ENCODE measurements at regions of chr3 and their contacts with region 1.

Region 1: GRCh38 chr3:197501879-197502620 is 53.7 kb downstream of the BDH1 start:
- DNase-seq: peak; percentile 64
- H3K4me3 ChIP-seq: no peak overlapping the region
- H3K27ac ChIP-seq: no peak overlapping the region
- H3K4me1 ChIP-seq: no peaks in the 10 kb centered on the region
- H3K27me3 ChIP-seq: no peaks in the 10 kb centered on the region
- CTCF ChIP-seq: peak; percentile 74 to 78
- POLR2A ChIP-seq: no peak

Region 2: GRCh38 chr3:197256836-197257444 is 245.1 kb before region 1 on chr3:
- CTCF ChIA-PET with region 1: interaction called, 148 read pairs
- POLR2A ChIA-PET with region 1: interaction called, 3 read pairs
- dilution Hi-C with region 1: loop called (anchors 25 kb)
- intact Hi-C with region 1: loop called (anchors 1 kb)
- DNase-seq: peak; percentile 71
- H3K4me3 ChIP-seq: no peak overlapping the region
- H3K27ac ChIP-seq: no peak overlapping the region
- H3K4me1 ChIP-seq: no peaks in the 10 kb centered on the region
- H3K27me3 ChIP-seq: no peaks in the 10 kb centered on the region
- CTCF ChIP-seq: peak; percentile 34 to 50
- POLR2A ChIP-seq: no peak

Region 3: GRCh38 chr3:197298341-197298857 is 203.7 kb before region 1 on chr3 and contains the start of gene DLG1:
- CTCF ChIA-PET with region 1: interaction called, 48 read pairs
- POLR2A ChIA-PET with region 1: no interaction called
- dilution Hi-C with region 1: no loop called
- intact Hi-C with region 1: loop called (anchors 2 kb)
- DNase-seq: peak; percentile 94
- H3K4me3 ChIP-seq: peak within 1 kb of the TSS; percentile 61 to 98 (median 73)
- H3K27ac ChIP-seq: peak within 1 kb of the TSS; percentile 64
- H3K4me1 ChIP-seq: peaks cover 18% of the 10 kb centered on the region
- H3K27me3 ChIP-seq: no peaks in the 10 kb centered on the region
- CTCF ChIP-seq: no peak
- POLR2A ChIP-seq: peak; percentile 30
- total RNA-seq, gene DLG1: 66.0 and 80.1 TPM in 2 replicates

Region 4: DNA sequence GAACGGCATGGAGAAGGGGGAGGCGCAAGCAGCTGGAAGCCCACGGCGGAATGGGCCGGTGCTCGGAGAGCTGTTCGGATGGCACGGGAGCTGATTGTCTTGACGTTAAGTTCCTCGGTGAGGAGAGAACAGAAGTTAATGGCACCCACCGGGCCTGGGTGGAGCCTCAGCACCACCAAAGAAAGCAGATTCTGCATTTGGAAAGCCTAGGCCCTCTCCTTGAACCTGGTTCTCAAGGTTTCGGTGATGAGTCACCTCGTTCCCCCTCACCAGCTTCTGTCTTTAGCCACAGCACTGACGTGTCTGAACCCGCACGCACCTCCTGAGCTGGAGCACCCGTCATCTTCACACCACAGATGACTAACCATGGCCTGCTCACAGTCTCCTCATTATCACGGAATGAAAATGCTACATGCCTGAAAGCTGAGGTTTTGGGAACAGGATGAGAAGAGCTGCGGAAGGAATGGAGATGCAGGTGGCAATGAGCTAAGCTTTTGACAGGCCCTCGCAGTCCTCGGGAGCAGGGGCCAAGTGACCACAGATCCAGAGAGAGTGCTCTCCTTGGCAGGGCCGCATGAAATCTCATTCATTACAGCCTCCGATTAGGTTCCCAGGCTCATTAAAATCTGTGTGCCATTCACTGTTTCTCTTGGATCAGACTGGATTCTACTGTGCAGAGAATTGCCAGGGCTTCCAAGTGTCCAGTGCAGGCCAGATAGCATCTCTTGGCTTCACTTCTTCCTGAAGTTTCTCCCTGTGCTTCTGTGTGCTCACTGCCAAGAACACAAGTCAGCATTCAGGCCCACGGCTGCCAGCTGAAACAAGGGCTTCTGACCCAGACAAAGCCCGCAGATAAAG is 107.4 kb before region 1 on chr3:
- CTCF ChIA-PET with region 1: interaction called, 16 read pairs
- POLR2A ChIA-PET with region 1: no interaction called
- dilution Hi-C with region 1: no loop called
- intact Hi-C with region 1: no loop called
- DNase-seq: peak; percentile 94
- H3K4me3 ChIP-seq: no peak overlapping the region
- H3K27ac ChIP-seq: peak overlapping the region; percentile 90
- H3K4me1 ChIP-seq: peaks cover 33% of the 10 kb centered on the region
- H3K27me3 ChIP-seq: peaks cover 4 to 5% of the 10 kb centered on the region in 2 experiments
- CTCF ChIP-seq: no peak
- POLR2A ChIP-seq: no peak

Region 5: GRCh38 chr3:197466586-197467399 is 35.3 kb before region 1 on chr3:
- CTCF ChIA-PET with region 1: interaction called, 14 read pairs
- POLR2A ChIA-PET with region 1: no interaction called
- dilution Hi-C with region 1: no loop called
- intact Hi-C with region 1: no loop called
- DNase-seq: peak; percentile 69
- H3K4me3 ChIP-seq: no peak overlapping the region
- H3K27ac ChIP-seq: peak overlapping the region; percentile 36
- H3K4me1 ChIP-seq: peaks cover 33% of the 10 kb centered on the region
- H3K27me3 ChIP-seq: no peaks in the 10 kb centered on the region
- CTCF ChIP-seq: no peak
- POLR2A ChIP-seq: no peak

Region 6: GRCh38 chr3:197590313-197590962 is 88.4 kb after region 1 on chr3:
- CTCF ChIA-PET with region 1: no interaction called
- POLR2A ChIA-PET with region 1: no interaction called
- dilution Hi-C with region 1: no loop called
- intact Hi-C with region 1: no loop called
- DNase-seq: no peak
- H3K4me3 ChIP-seq: no peak overlapping the region
- H3K27ac ChIP-seq: no peak overlapping the region
- H3K4me1 ChIP-seq: no peaks in the 10 kb centered on the region
- H3K27me3 ChIP-seq: peaks cover 2% of the 10 kb centered on the region in 2 experiments
- CTCF ChIP-seq: no peak
- POLR2A ChIP-seq: no peak

Region 7: DNA sequence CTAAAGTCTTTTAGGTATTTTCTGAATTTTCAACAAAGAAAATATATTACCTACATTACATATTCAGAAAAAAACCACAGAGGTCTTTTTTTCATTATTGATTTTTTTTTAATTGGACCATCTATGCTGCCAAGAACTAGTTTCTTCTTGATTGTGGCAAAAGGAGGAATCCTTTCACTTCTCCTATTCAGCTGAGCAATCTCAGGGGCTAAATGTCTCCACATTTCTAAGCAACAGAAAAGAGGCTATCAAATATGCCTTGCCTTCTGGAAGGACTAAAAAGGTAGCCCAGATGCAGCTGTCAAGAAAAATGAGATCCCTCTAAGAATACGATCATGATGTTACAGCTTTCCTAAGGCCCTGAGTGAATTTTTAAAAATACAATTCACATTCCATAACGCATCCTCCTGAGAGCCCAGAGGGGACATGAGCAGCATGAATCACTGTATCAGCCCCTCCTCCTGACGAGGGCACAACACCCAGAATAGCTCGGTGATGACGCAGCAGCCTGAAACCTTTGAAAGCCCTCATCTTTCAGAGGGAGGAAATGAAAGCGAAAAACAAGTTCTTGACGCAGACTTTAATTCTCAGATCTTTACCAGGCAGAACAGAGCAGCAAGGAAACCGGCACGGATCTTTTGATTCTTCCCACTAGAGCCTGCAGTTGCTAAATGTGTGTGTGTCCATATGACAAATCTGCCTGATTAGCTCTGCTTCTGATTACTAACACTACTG is 210.1 kb after region 1 on chr3:
- CTCF ChIA-PET with region 1: no interaction called
- POLR2A ChIA-PET with region 1: no interaction called
- dilution Hi-C with region 1: no loop called
- intact Hi-C with region 1: no loop called
- DNase-seq: peak; percentile 98
- H3K4me3 ChIP-seq: peak overlapping the region in 1 of 3 experiments; percentile 70
- H3K27ac ChIP-seq: peak overlapping the region; percentile 71
- H3K4me1 ChIP-seq: peaks cover 26% of the 10 kb centered on the region
- H3K27me3 ChIP-seq: no peaks in the 10 kb centered on the region
- CTCF ChIP-seq: no peak
- POLR2A ChIP-seq: peak; percentile 46

Region 8: DNA sequence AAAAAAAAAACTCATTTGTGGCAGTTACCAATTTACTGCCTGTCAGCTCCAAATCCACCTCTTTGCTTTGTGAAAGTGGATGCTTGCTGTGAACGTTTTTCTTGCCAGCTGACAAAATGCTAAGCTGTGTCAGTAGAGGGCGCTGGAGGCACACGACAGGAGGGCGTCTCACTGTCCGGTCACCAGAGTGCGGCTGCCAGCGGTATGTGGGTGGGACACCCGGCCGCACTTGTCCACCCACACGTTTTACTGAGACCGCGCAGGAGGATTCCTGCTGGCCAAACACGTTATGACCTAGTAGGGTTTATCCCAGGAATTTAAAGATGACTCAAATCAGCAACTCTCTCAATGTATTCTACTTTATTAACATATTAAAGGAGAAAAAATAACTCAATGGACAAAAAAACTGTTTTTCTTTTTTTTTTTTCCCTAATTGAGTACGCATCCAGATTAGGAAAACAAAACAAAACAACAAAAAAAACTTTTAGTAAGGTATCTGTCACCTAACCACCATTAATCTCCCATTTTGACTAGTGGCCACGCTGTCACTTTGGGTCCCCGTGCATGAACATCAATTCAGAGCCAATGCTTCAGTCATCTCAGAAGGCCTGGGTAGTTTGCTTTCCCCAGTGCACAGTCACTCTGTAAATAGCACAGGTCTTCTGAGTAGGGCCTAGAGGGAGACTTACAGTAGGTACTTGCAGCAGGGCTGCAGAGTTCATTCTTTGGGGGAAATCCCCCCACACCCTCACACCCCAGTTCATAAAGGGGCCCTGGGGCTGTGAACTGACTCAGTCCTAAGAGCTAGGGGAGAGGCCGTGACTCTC is 404.2 kb after region 1 on chr3:
- CTCF ChIA-PET with region 1: no interaction called
- POLR2A ChIA-PET with region 1: no interaction called
- dilution Hi-C with region 1: no loop called
- intact Hi-C with region 1: no loop called
- DNase-seq: peak; percentile 88
- H3K4me3 ChIP-seq: no peak overlapping the region
- H3K27ac ChIP-seq: no peak overlapping the region
- H3K4me1 ChIP-seq: no peaks in the 10 kb centered on the region
- H3K27me3 ChIP-seq: no peaks in the 10 kb centered on the region
- CTCF ChIP-seq: peak; percentile 87 to 89
- POLR2A ChIP-seq: no peak

Measured in endothelial cell of umbilical vein (primary cell).